ENCODE measurements at regions of chr15 and their contacts with region 1.

Region 1: DNA sequence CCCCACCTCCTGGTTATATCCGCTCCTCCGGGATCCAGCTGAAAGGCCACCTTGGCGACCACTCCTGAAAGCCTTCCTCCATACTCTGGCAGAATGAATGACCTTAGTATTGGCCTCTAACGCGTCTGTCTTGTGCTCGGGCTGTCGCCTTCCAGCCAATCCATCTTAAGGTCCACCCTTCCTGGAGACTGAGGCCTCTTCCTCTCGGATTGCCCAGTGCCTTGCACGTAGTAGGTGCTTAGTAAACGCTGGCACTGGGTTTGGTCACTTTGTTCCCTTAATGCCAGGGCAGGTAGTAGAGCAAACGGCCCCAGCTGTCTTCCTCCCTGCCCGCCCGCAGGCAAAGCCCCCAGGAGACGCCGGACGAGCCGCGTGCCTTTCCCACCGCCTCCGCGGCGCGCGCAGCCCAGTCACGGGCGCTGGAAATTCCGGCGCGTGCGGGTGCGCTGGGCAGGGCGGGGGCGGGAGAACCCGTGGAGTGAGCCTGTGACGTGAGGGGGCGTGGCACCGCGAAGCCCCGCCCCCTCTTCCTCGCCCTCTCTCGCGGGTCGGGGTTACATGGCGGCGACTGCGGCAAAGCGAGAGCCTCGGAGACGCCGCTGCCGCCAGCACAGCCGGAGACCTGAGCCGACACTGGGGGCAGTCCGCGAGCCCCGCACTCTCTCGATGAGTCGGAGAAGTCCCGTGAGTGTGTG is at the start of gene MAPK6:
- DNase-seq: peak; percentile 93
- H3K4me3 Mint-ChIP-seq: peak within 1 kb of the TSS; percentile 97
- H3K27ac Mint-ChIP-seq: peak within 1 kb of the TSS; percentile 97
- H3K4me1 Mint-ChIP-seq: peaks cover 37% of the 10 kb centered on the region
- H3K27me3 Mint-ChIP-seq: no peaks in the 10 kb centered on the region
- total RNA-seq, gene MAPK6: 16.7 to 17.2 TPM

Region 2: DNA sequence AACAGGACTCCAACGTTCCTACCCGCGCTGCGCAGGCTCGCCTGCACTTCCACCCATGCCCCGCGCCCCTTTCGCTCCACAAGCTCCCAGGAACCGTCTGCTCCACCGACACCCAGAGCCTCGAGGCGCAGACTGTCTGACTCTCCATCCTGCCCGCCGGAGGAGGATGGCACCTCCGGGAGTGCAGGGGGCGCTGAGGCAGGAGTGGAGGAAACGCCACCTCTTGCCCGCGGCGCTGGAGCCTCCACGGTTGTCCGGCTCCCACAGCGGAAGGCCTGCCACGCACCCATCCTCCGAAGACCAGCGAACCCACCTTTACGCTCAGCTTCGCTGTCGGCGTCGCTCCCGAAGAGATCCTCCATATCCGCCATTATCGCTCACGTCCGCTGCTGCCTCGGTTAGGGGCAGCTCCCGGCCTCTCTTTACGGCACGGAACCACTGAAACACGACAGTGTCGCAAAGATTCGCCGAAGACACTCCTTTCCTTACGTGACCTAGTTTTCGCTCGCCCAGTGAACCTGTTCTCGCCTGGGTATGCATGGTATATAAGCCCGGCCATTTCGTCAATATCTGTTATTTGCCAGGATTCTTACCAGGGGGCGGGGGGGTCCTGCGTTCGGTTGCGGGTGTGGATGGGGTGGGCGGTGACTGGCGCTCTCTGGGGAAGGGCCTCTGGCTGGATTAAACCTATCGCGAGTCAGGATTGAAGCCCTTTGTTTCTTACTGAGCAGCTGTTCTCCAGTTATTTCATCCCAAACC is 47.3 kb before region 1 on chr15 and contains the start of gene LEO1:
- CTCF ChIA-PET with region 1: interaction called, 3 read pairs
- intact Hi-C with region 1: loop called (anchors 1 kb)
- DNase-seq: peak; percentile 95
- H3K4me3 Mint-ChIP-seq: peak within 1 kb of the TSS; percentile 90
- H3K27ac Mint-ChIP-seq: peak within 1 kb of the TSS; percentile 96
- H3K4me1 Mint-ChIP-seq: peaks cover 24% of the 10 kb centered on the region
- H3K27me3 Mint-ChIP-seq: peaks cover 2% of the 10 kb centered on the region
- total RNA-seq, gene LEO1: 21.0 to 23.8 TPM

Region 3: DNA sequence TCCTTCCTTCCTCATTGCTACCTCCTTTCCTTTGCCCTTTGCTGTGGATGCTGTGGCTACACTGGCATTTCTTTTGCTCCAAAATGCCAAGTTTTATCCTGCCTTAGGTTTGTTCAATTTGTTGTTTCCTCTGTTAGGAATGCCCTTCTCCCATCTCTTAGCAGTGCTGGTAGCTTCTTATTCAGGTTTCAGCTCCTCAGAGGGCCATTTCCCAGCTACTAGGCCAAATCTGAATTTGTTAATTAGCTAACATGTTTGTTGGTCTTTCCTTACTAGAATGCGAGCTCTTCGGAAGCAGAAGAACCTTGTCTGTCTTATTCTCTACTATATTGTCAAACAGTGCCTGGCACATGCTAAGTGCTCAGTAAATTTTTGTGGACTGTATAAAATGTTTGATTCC is 11.2 kb after region 1 on chr15:
- CTCF ChIA-PET with region 1: interaction called, 10 read pairs
- intact Hi-C with region 1: no loop called
- DNase-seq: no peak
- H3K4me3 Mint-ChIP-seq: no peak overlapping the region
- H3K27ac Mint-ChIP-seq: no peak overlapping the region
- H3K4me1 Mint-ChIP-seq: peaks cover 29% of the 10 kb centered on the region
- H3K27me3 Mint-ChIP-seq: no peaks in the 10 kb centered on the region

Region 4: DNA sequence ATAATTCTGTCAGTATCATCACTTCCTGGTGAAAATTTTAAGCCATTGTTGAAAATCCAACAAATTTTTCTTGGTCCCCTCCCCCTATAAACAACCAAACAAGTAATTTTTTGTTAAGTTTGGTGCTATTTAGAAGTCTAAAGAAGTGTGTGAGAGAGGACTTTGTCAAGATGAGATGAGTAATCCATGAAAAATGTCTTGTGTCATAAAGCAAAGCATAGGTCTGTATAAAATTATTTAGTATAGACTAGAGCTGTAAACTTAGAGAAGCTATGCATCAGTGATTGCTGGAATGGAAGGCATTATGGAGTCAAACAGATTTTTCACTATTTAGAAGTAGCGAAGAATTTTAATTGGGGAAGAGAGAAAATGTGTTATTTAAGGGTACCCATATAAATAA is 31.6 kb after region 1 on chr15:
- CTCF ChIA-PET with region 1: interaction called, 6 read pairs
- intact Hi-C with region 1: loop called (anchors 1 kb)
- DNase-seq: no peak
- H3K4me3 Mint-ChIP-seq: no peak overlapping the region
- H3K27ac Mint-ChIP-seq: no peak overlapping the region
- H3K4me1 Mint-ChIP-seq: peaks cover 15% of the 10 kb centered on the region
- H3K27me3 Mint-ChIP-seq: no peaks in the 10 kb centered on the region

Measured in activated naive CD4-positive, alpha-beta T cell treated with anti-CD3 and anti-CD28 coated beads for 36 hours (primary cell).